Kidney (tissue), 22 donors: ENCODE measurements at regions of chr1 and their contacts with region 1.

Region 1: DNA sequence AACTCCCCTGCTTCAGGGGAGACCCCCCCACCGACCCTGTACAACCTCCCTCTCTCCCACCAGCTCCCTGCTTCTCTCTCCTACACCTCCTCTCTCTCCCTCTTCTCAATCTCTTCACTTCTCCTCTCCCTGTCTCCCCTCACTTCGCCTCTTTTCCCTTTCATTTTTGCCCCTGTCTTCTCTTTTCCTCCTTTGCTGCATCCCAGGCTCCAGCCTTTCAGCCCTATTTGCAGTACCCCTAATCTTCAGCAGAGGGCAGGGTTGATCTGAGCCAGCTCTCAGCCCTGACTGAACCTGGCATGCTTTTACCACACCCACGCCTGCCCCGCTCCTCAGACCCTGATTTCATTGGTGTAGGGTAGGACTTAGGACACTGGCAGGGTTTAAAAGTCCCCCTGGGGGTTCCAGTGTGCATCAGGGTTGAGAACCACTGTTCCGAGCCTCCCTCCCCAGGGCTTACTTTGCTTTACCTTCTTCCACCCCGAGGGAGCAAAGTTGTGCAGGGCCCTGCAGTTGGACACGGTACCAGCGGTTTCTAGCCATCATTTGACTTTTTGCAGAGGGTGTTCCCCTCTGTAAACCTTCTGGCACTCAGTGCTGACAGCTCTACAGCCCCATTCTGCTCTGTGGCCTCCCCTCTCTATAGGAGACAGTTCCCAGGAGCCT is 67.3 kb upstream of the CNTN2 start:
- DNase-seq: peak in 4 of 5 donors; percentile 57 to 82 (median 66)
- H3K4me3 ChIP-seq: no peak overlapping the region
- H3K27ac ChIP-seq: no peak overlapping the region
- H3K4me1 ChIP-seq: no peaks in the 10 kb centered on the region
- H3K27me3 ChIP-seq: no peaks in the 10 kb centered on the region
- CTCF ChIP-seq: peak; percentile 68

Region 2: DNA sequence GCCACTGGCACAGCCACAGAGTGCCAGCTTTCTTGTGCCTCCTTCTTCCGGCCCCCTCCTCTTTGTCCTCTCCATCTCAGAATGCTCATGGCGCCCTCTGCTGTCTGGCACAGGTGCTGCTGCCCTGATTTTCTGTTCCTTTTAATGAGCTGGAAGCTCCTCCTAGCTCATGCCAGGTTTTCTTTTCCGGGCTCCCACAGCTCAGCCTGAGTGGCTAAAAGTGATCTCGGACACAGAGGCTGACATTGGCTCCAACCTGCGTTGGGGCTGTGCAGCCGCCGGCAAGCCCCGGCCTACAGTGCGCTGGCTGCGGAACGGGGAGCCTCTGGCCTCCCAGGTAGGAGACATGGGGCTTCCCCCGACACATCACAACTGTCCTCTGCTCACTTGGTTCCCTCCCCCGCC is 86.0 kb after region 1 on chr1:
- intact Hi-C with region 1: loop called (anchors 10 kb)
- DNase-seq: peak in 4 of 5 donors; percentile 92 to 94 (median 92)
- H3K4me3 ChIP-seq: no peak overlapping the region
- H3K27ac ChIP-seq: no peak overlapping the region
- H3K4me1 ChIP-seq: peaks cover 0 to 10% (median 0%) of the 10 kb centered on the region in 3 donors
- H3K27me3 ChIP-seq: no peaks in the 10 kb centered on the region
- CTCF ChIP-seq: peak; percentile 97

Region 3: DNA sequence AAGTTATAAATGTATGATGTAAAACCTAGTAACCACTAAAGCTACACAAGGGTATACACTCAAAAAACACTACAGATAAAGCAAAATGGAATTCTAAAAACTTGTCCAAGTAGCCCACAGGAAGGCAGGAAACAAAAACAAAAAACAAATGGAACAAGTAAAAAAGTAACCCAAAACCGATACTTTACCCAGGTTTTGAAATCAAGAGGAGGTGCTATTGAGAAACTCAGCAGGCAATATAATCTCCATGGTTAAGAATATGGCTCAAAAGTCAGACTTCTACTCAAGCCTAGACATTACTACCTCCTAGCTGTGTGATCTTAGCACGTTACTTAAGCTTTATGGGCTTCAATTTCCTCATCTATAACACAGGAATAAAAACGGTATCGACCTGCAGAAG is 132.8 kb after region 1 on chr1:
- intact Hi-C with region 1: no loop called
- DNase-seq: no peak
- H3K4me3 ChIP-seq: no peak overlapping the region
- H3K27ac ChIP-seq: no peak overlapping the region
- H3K4me1 ChIP-seq: no peaks in the 10 kb centered on the region
- H3K27me3 ChIP-seq: no peaks in the 10 kb centered on the region
- CTCF ChIP-seq: no peak